ENCODE measurements at regions of chr1 and their contacts with region 1.

Region 1: GRCh38 chr1:35192853-35193664 is at the start of gene SFPQ:
- DNase-seq: peak; percentile 96
- H3K4me3 Mint-ChIP-seq: peak within 1 kb of the TSS; percentile 94
- H3K27ac Mint-ChIP-seq: peak within 1 kb of the TSS; percentile 97
- H3K4me1 Mint-ChIP-seq: peaks cover 39% of the 10 kb centered on the region
- H3K27me3 Mint-ChIP-seq: peaks cover 3% of the 10 kb centered on the region
- total RNA-seq, gene SFPQ: 398 and 404 TPM in 2 replicates

Region 2: GRCh38 chr1:34859446-34860200 is 333.4 kb before region 1 on chr1 and contains the start of gene SMIM12:
- intact Hi-C with region 1: loop called (anchors 1 kb)
- DNase-seq: peak; percentile 90
- H3K4me3 Mint-ChIP-seq: peak within 1 kb of the TSS; percentile 98
- H3K27ac Mint-ChIP-seq: peak within 1 kb of the TSS; percentile 96
- H3K4me1 Mint-ChIP-seq: peaks cover 51% of the 10 kb centered on the region
- H3K27me3 Mint-ChIP-seq: peaks cover 4% of the 10 kb centered on the region
- total RNA-seq, gene SMIM12: 62.4 and 66.2 TPM in 2 replicates

Region 3: DNA sequence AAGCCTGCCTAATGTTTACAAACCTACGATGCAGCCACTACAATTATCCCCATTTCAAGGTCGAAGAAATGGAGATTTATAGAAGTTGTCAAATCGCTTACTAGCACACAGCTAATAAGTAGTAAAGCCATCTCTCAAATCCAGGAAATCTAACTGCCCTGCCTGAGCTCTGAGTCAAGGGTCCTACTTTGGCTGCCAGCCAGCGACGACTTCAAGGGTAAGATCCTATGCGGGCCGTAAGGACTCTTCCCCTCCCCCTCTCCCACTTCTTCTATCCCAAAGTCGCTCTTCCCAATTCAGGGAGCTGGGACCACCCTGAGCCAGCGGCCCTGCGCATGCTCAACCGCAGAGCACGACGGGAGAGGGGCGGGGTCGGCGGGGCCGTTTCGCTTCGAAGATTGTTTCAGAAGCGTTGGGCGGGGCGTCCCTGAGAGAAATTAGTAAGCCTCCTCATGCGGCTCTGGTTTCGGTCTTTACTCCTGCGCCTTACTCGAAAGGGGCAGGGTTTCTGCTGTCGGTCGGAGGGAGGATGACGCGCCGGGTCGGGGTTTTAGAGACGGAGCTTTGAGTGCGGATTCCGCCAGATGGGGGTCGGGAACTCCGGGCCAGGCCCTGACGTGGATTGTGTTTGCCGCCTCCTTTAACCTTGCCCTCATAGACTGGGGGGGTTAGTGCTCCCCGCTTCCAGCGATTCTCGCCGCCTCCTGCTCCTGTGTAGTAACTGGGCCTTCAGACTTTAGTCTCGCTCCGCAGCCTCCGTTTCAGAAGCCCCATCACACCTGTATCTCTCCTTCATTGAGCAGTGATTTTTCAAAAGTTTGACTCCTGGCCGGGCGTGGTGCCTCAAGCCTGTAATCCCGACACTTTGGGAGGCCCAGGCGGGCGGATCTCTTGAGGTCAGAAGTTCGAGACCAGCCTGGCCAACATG is 113.8 kb before region 1 on chr1 and contains the start of gene ZMYM1:
- intact Hi-C with region 1: loop called (anchors 1 kb)
- DNase-seq: peak; percentile 82
- H3K4me3 Mint-ChIP-seq: peak within 1 kb of the TSS; percentile 98
- H3K27ac Mint-ChIP-seq: peak within 1 kb of the TSS; percentile 100
- H3K4me1 Mint-ChIP-seq: peaks cover 34% of the 10 kb centered on the region
- H3K27me3 Mint-ChIP-seq: no peaks in the 10 kb centered on the region
- total RNA-seq, gene ZMYM1: 3.3 and 5.3 TPM in 2 replicates

Region 4: GRCh38 chr1:35268282-35269200 is 75.5 kb after region 1 on chr1 and contains the start of gene ZMYM4:
- intact Hi-C with region 1: loop called (anchors 1 kb)
- DNase-seq: peak; percentile 88
- H3K4me3 Mint-ChIP-seq: peak within 1 kb of the TSS; percentile 87
- H3K27ac Mint-ChIP-seq: peak within 1 kb of the TSS; percentile 93
- H3K4me1 Mint-ChIP-seq: peaks cover 38% of the 10 kb centered on the region
- H3K27me3 Mint-ChIP-seq: no peaks in the 10 kb centered on the region
- total RNA-seq, gene ZMYM4: 25.1 and 33.0 TPM in 2 replicates

Region 5: GRCh38 chr1:35557292-35558063 is 364.4 kb after region 1 on chr1 and contains the starts of genes KIAA0319L and NCDN:
- intact Hi-C with region 1: loop called (anchors 2 kb)
- DNase-seq: peak; percentile 94
- H3K4me3 Mint-ChIP-seq: peak within 1 kb of the TSS; percentile 98
- H3K27ac Mint-ChIP-seq: peak within 1 kb of the TSS; percentile 96
- H3K4me1 Mint-ChIP-seq: peaks cover 68% of the 10 kb centered on the region
- H3K27me3 Mint-ChIP-seq: no peaks in the 10 kb centered on the region
- total RNA-seq, gene KIAA0319L: 42.5 and 43.6 TPM in 2 replicates
- total RNA-seq, gene NCDN: 43.8 and 45.1 TPM in 2 replicates

Region 6: DNA sequence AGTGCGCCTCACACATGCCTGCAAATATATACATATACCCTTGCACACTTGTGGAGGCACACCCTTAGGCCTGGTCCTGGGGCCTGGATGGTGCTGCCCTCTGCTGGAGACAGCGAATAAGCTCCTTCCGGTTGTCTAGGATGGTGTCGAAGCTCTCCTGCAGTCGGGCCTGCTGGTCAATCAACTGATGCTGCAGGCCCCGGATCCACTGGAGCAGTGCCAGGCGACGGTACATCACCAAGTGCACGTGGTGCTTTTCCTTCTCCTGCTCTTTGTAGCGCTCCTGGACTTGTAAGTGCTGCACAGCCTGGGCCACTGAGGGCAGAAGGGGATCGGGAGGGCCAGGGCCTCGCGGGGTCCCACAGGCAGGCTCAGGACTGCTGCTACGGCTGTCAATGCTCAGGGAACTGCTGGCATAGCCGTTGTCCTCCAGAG is 522.5 kb after region 1 on chr1:
- intact Hi-C with region 1: loop called (anchors 5 kb)
- DNase-seq: peak; percentile 69
- H3K4me3 Mint-ChIP-seq: peak overlapping the region; percentile 56
- H3K27ac Mint-ChIP-seq: no peak overlapping the region
- H3K4me1 Mint-ChIP-seq: peaks cover 37% of the 10 kb centered on the region
- H3K27me3 Mint-ChIP-seq: peaks cover 4% of the 10 kb centered on the region

Region 7: GRCh38 chr1:36014722-36015220 is 821.7 kb after region 1 on chr1:
- intact Hi-C with region 1: no loop called
- DNase-seq: no peak
- H3K4me3 Mint-ChIP-seq: no peak overlapping the region
- H3K27ac Mint-ChIP-seq: no peak overlapping the region
- H3K4me1 Mint-ChIP-seq: no peaks in the 10 kb centered on the region
- H3K27me3 Mint-ChIP-seq: no peaks in the 10 kb centered on the region

Measured in activated T-helper 1 cell treated with anti-CD3 and anti-CD28 coated beads, Interleukin-12 subunit alpha, Interleukin-12 subunit beta, Interleukin-2, Interleukin-4 antibody, amounts not matched to agents 30 ng/mL and 10 ng/mL and 1 ng/mL, durations not matched to agents 14 hours and 24 hours and 36 hours (primary cell).